PC-9 (cell line): ENCODE measurements at regions of chr10 and their contacts with region 1.

Region 1: DNA sequence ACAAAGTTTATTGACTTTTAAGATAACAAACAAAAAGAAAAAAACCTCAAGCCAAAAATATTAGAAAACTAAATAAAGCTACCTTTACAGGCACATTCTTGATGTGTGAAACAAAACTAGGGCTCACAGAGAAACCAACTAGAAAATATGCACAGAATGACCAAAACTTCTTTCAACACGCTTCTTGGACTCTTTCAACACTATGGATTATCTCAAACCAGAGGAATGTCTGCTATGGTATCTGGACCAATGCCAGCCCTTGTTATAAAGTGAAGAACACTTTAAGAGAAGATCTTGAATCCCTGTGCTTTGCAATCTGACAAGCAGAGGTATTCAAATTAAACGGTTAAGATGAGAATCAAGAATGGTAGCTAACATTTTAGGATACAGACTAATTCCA is 76.6 kb downstream of the DNAJC1 start:
- DNase-seq: peak; percentile 40 to 85
- H3K4me3 ChIP-seq: no peak overlapping the region
- H3K27ac ChIP-seq: peak overlapping the region; percentile 82
- H3K4me1 ChIP-seq: peaks cover 27% of the 10 kb centered on the region
- H3K27me3 ChIP-seq: no peaks in the 10 kb centered on the region
- CTCF ChIP-seq: no peak

Region 2: GRCh38 chr10:20795391-20795790 is 1131.6 kb before region 1 on chr10:
- CTCF ChIA-PET with region 1: no interaction called
- POLR2A ChIA-PET with region 1: interaction called, 28 read pairs
- intact Hi-C with region 1: no loop called
- DNase-seq: no peak
- H3K4me3 ChIP-seq: no peak overlapping the region
- H3K27ac ChIP-seq: no peak overlapping the region
- H3K4me1 ChIP-seq: no peaks in the 10 kb centered on the region
- H3K27me3 ChIP-seq: no peaks in the 10 kb centered on the region
- CTCF ChIP-seq: no peak

Region 3: GRCh38 chr10:21989453-21990154 is 62.7 kb after region 1 on chr10:
- CTCF ChIA-PET with region 1: no interaction called
- POLR2A ChIA-PET with region 1: no interaction called
- intact Hi-C with region 1: no loop called
- DNase-seq: peak in 1 of 2 experiments; percentile 44
- H3K4me3 ChIP-seq: no peak overlapping the region
- H3K27ac ChIP-seq: no peak overlapping the region
- H3K4me1 ChIP-seq: no peaks in the 10 kb centered on the region
- H3K27me3 ChIP-seq: no peaks in the 10 kb centered on the region
- CTCF ChIP-seq: peak; percentile 56